K562 (cell line): ENCODE measurements at regions of chr4 and their contacts with region 1.

Region 1: GRCh38 chr4:87937523-87937922 is 38.0 kb upstream of the SPP1 start:
- DNase-seq: no peak
- ATAC-seq: no peak
- H3K4me3 ChIP-seq: no peak overlapping the region
- H3K27ac ChIP-seq: no peak overlapping the region
- H3K4me1 ChIP-seq: no peaks in the 10 kb centered on the region
- H3K27me3 ChIP-seq: no peaks in the 10 kb centered on the region
- CTCF ChIP-seq: no peak
- EP300 ChIP-seq: no peak
- POLR2A ChIP-seq: no peak
- RAD21 ChIP-seq: no peak

Region 2: GRCh38 chr4:87882321-87882720 is 55.2 kb before region 1 on chr4:
- CTCF ChIA-PET with region 1: no interaction called
- POLR2A ChIA-PET with region 1: no interaction called
- in situ Hi-C with region 1: no loop called
- intact Hi-C with region 1: no loop called
- DNase-seq: no peak
- ATAC-seq: no peak
- H3K4me3 ChIP-seq: no peak overlapping the region
- H3K27ac ChIP-seq: no peak overlapping the region
- H3K4me1 ChIP-seq: no peaks in the 10 kb centered on the region
- H3K27me3 ChIP-seq: no peaks in the 10 kb centered on the region
- CTCF ChIP-seq: no peak
- EP300 ChIP-seq: no peak
- POLR2A ChIP-seq: no peak
- RAD21 ChIP-seq: no peak

Region 3: GRCh38 chr4:87926554-87927098 is 10.9 kb before region 1 on chr4:
- CTCF ChIA-PET with region 1: no interaction called
- POLR2A ChIA-PET with region 1: no interaction called
- in situ Hi-C with region 1: no loop called
- intact Hi-C with region 1: loop called (anchors 1 kb)
- DNase-seq: no peak
- ATAC-seq: no peak
- H3K4me3 ChIP-seq: no peak overlapping the region
- H3K27ac ChIP-seq: no peak overlapping the region
- H3K4me1 ChIP-seq: no peaks in the 10 kb centered on the region
- H3K27me3 ChIP-seq: no peaks in the 10 kb centered on the region
- CTCF ChIP-seq: no peak
- EP300 ChIP-seq: no peak
- POLR2A ChIP-seq: no peak
- RAD21 ChIP-seq: no peak